ENCODE measurements at regions of chr17 and their contacts with region 1.

Region 1: DNA sequence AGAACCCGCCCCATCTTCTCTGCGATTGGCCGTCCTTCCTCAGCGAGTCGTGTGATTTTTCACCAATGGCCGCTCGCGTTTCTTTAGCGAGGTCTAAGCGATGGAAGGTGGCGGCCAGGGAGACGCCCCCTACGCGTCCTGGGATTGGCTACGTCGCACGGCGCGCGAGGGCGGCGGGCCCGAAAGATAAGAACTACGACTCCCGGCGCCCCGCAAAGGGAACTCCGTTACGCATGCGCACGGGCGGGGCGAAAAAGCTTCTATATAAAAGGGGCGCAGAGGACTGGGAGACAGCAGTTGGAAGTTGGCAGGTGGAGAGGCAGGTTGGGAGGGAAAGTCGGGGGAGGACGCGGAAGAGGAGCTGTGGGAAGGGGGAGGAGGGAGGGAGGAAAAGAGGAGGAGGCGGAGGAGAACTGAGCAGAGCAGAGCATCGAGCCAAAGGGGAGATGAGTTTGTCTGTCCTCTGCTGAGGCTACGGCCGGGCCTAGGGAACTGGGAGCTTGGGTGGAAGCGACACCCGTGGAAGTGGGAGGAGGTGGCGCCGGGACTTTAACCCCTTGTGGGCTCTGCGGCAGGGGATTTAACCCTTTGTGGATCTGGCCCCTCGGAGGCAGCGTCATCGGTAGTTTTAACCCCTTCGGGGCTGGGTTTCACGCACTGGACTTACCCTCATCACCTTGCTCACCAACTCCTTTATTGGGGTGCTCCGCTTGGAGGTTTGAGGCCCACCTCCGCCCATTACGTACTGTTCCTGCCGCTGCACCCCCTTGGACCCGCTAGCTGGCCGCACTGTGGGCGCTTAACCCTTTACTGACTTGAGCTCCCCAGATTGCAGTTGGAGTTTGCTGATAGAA is at the start of gene HEXIM1:
- DNase-seq: peak; percentile 99
- H3K4me3 ChIP-seq: peak within 1 kb of the TSS; percentile 70
- H3K4me3 Mint-ChIP-seq: peak within 1 kb of the TSS; percentile 99
- H3K27ac Mint-ChIP-seq: peak within 1 kb of the TSS; percentile 94
- H3K4me1 ChIP-seq: peaks cover 17% of the 10 kb centered on the region
- H3K4me1 Mint-ChIP-seq: peaks cover 15% of the 10 kb centered on the region
- H3K27me3 ChIP-seq: no peaks in the 10 kb centered on the region
- H3K27me3 Mint-ChIP-seq: peaks cover 4% of the 10 kb centered on the region
- CTCF ChIP-seq: no peak
- total RNA-seq, gene HEXIM1: 71.0 and 78.0 TPM in 2 replicates

Region 2: DNA sequence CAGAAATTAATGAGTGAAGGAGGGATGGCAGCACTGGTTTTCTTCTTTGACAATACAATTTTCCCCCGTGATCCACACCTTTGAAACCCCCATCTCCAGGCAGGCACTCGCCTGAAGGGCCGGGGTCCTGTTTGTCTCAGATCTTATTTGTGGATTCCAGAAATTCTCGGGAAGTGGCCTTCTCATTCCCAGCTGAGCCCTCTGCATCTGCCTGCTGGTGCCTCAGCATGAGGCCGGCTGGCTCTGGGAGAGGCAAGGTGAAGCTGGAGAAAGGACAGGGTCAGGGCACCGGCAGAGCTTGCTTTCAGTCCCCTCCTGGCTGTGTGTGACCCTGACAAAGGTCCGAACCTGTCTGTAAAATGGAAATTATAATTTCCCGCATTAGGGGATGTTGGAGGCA is 144.5 kb before region 1 on chr17:
- CTCF ChIA-PET with region 1: no interaction called
- POLR2A ChIA-PET with region 1: interaction called, 11 read pairs
- intact Hi-C with region 1: no loop called
- DNase-seq: no peak
- H3K4me3 ChIP-seq: no peak overlapping the region
- H3K4me3 Mint-ChIP-seq: no peak overlapping the region
- H3K27ac Mint-ChIP-seq: no peak overlapping the region
- H3K4me1 ChIP-seq: no peaks in the 10 kb centered on the region
- H3K4me1 Mint-ChIP-seq: no peaks in the 10 kb centered on the region
- H3K27me3 ChIP-seq: no peaks in the 10 kb centered on the region
- H3K27me3 Mint-ChIP-seq: no peaks in the 10 kb centered on the region
- CTCF ChIP-seq: no peak

Region 3: GRCh38 chr17:45038728-45039634 is 109.4 kb before region 1 on chr17:
- CTCF ChIA-PET with region 1: no interaction called
- POLR2A ChIA-PET with region 1: no interaction called
- intact Hi-C with region 1: no loop called
- DNase-seq: no peak
- H3K4me3 ChIP-seq: no peak overlapping the region
- H3K4me3 Mint-ChIP-seq: no peak overlapping the region
- H3K27ac Mint-ChIP-seq: no peak overlapping the region
- H3K4me1 ChIP-seq: peaks cover 5% of the 10 kb centered on the region; the same call in 1 of the 2 replicates
- H3K4me1 Mint-ChIP-seq: no peaks in the 10 kb centered on the region
- H3K27me3 ChIP-seq: no peaks in the 10 kb centered on the region
- H3K27me3 Mint-ChIP-seq: no peaks in the 10 kb centered on the region
- CTCF ChIP-seq: no peak

Region 4: GRCh38 chr17:45161019-45161825 is 12.8 kb after region 1 on chr17:
- CTCF ChIA-PET with region 1: interaction called, 158 read pairs
- POLR2A ChIA-PET with region 1: interaction called, 279 read pairs
- intact Hi-C with region 1: loop called (anchors 1 kb)
- DNase-seq: peak; percentile 99 to 100
- H3K4me3 ChIP-seq: peak overlapping the region; percentile 61
- H3K4me3 Mint-ChIP-seq: peak overlapping the region; percentile 77
- H3K27ac Mint-ChIP-seq: peak overlapping the region; percentile 99
- H3K4me1 ChIP-seq: peaks cover 45% of the 10 kb centered on the region
- H3K4me1 Mint-ChIP-seq: peaks cover 27% of the 10 kb centered on the region
- H3K27me3 ChIP-seq: no peaks in the 10 kb centered on the region
- H3K27me3 Mint-ChIP-seq: no peaks in the 10 kb centered on the region
- CTCF ChIP-seq: no peak

Region 5: DNA sequence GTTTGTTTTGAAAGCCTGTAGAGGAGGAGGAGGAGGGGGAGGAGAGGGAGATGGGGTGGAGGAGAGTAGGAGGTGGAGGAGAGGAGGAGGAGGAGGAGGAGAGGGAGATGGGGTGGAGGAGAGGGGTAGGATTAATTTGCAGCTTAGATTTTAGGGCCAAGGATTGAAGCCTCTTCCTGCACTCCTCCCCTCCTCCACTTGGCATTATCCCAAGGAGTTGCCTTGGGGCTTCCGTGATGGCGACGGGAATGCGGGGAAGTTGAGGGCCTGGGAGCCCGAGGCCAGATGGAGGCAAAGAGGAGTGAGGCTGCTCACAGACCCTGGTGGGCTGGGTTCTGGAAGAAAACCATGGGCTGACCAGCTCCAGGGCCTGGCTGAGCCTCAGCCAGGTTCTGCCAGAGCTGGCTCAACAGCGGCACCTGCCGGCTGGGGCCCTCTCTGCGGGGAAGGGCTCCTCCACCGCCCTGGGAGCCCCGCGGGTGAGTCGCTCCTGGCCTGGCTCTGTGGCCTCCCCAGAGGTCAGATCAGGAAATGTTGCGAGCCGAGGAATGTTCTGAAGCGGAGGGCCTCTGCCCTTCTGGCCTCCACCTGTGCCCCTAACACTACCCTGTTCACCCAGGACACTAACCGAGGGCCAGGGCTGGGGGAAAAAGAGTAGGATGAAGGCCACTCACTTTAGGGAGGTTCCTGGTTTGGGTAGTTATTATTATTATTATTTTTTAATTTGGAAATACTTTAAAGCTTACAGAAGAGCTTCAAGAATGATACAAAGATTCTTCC is 49.3 kb after region 1 on chr17:
- CTCF ChIA-PET with region 1: interaction called, 161 read pairs
- POLR2A ChIA-PET with region 1: interaction called, 84 read pairs
- intact Hi-C with region 1: loop called (anchors 1 kb)
- DNase-seq: peak; percentile 96 to 99
- H3K4me3 ChIP-seq: no peak overlapping the region
- H3K4me3 Mint-ChIP-seq: no peak overlapping the region
- H3K27ac Mint-ChIP-seq: peak overlapping the region; percentile 85
- H3K4me1 ChIP-seq: peaks cover 33% of the 10 kb centered on the region
- H3K4me1 Mint-ChIP-seq: peaks cover 14% of the 10 kb centered on the region
- H3K27me3 ChIP-seq: no peaks in the 10 kb centered on the region
- H3K27me3 Mint-ChIP-seq: no peaks in the 10 kb centered on the region
- CTCF ChIP-seq: peak; percentile 99 to 100

Region 6: DNA sequence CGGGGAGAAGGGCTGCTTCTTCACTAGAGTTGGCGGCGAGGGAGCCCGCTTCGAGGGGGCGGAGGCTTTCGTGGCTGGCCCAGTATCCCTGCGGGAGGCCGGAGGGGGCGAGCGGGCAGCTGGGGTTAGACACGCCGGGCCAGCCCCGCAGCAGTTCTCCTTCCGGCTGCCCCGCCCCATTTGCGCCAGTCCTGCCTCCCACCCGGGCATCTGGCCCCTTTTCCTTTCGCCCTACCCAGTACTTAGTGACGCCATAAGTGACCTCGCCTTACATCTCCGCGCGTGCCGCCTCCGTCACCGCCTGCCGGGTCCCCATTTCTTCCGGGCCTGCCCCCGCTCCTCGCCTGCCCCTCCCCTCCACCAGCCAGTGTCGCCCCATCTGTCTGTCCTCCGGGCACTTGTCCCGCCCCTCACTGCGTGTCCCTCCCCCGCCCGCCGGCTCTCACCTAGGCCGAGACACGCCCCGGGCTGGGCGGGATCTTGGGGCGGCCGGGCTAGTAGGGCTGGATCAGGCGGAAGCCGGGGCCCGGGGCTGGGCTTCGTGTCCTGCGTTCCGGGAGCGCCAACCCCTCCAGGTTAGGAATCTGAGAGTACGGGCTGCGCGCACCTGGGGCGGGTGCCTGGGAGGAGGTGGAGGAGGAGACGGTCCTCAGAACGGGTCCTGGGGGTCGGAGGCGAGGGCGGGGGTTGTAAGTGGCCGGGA is 99.2 kb after region 1 on chr17:
- CTCF ChIA-PET with region 1: interaction called, 11 read pairs
- POLR2A ChIA-PET with region 1: interaction called, 7 read pairs
- intact Hi-C with region 1: no loop called
- DNase-seq: peak; percentile 99
- H3K4me3 ChIP-seq: peak overlapping the region; percentile 63
- H3K4me3 Mint-ChIP-seq: peak overlapping the region; percentile 81
- H3K27ac Mint-ChIP-seq: peak overlapping the region; percentile 92
- H3K4me1 ChIP-seq: peaks cover 11% of the 10 kb centered on the region
- H3K4me1 Mint-ChIP-seq: peaks cover 10% of the 10 kb centered on the region
- H3K27me3 ChIP-seq: no peaks in the 10 kb centered on the region
- H3K27me3 Mint-ChIP-seq: peaks cover 2% of the 10 kb centered on the region
- CTCF ChIP-seq: no peak

Region 7: GRCh38 chr17:45317112-45317928 is 168.9 kb after region 1 on chr17:
- CTCF ChIA-PET with region 1: interaction called, 5 read pairs
- POLR2A ChIA-PET with region 1: interaction called, 16 read pairs
- intact Hi-C with region 1: no loop called
- DNase-seq: peak; percentile 100
- H3K4me3 ChIP-seq: peak overlapping the region; percentile 63
- H3K4me3 Mint-ChIP-seq: peak overlapping the region; percentile 89
- H3K27ac Mint-ChIP-seq: peak overlapping the region; percentile 96
- H3K4me1 ChIP-seq: peaks cover 31% of the 10 kb centered on the region
- H3K4me1 Mint-ChIP-seq: peaks cover 49% of the 10 kb centered on the region
- H3K27me3 ChIP-seq: no peaks in the 10 kb centered on the region
- H3K27me3 Mint-ChIP-seq: no peaks in the 10 kb centered on the region
- CTCF ChIP-seq: peak in 1 of 2 experiments; percentile 5

Measured in Caco-2 (cell line).